ENCODE measurements at regions of chr10 and their contacts with region 1.

Region 1: GRCh38 chr10:5977471-5978229 is at the start of gene IL15RA:
- DNase-seq: peak; percentile 82 to 90
- ATAC-seq: peak; percentile 77 to 88 (median 82)
- H3K4me3 ChIP-seq: peak within 1 kb of the TSS; percentile 97
- H3K4me3 Mint-ChIP-seq: peak within 1 kb of the TSS; percentile 94
- H3K27ac ChIP-seq: peak within 1 kb of the TSS; percentile 89
- H3K27ac Mint-ChIP-seq: peak within 1 kb of the TSS; percentile 84 to 89
- H3K4me1 ChIP-seq: peaks cover 22% of the 10 kb centered on the region
- H3K4me1 Mint-ChIP-seq: peaks cover 23 to 24% of the 10 kb centered on the region in 2 donors
- H3K27me3 ChIP-seq: no peaks in the 10 kb centered on the region
- H3K27me3 Mint-ChIP-seq: no peaks in the 10 kb centered on the region
- CTCF ChIP-seq: no peak
- total RNA-seq, gene IL15RA: 10.7 to 11.8 (median 11.3) TPM

Region 2: GRCh38 chr10:5692461-5693358 is 284.9 kb before region 1 on chr10:
- intact Hi-C with region 1: loop called (anchors 10 kb)
- DNase-seq: peak; percentile 80 to 81
- ATAC-seq: peak; percentile 95 to 97 (median 96)
- H3K4me3 ChIP-seq: peak overlapping the region; percentile 35
- H3K4me3 Mint-ChIP-seq: peak overlapping the region; percentile 86
- H3K27ac ChIP-seq: peak overlapping the region; percentile 67
- H3K27ac Mint-ChIP-seq: peak overlapping the region; percentile 92 to 97
- H3K4me1 ChIP-seq: peaks cover 15% of the 10 kb centered on the region
- H3K4me1 Mint-ChIP-seq: peaks cover 51 to 54% of the 10 kb centered on the region in 2 donors
- H3K27me3 ChIP-seq: no peaks in the 10 kb centered on the region
- H3K27me3 Mint-ChIP-seq: no peaks in the 10 kb centered on the region
- CTCF ChIP-seq: no peak

Region 3: GRCh38 chr10:5932345-5932744 is 45.3 kb before region 1 on chr10:
- intact Hi-C with region 1: no loop called
- DNase-seq: no peak
- ATAC-seq: no peak
- H3K4me3 ChIP-seq: no peak overlapping the region
- H3K4me3 Mint-ChIP-seq: no peak overlapping the region
- H3K27ac ChIP-seq: no peak overlapping the region
- H3K27ac Mint-ChIP-seq: no peak overlapping the region
- H3K4me1 ChIP-seq: no peaks in the 10 kb centered on the region
- H3K4me1 Mint-ChIP-seq: no peaks in the 10 kb centered on the region
- H3K27me3 ChIP-seq: no peaks in the 10 kb centered on the region
- H3K27me3 Mint-ChIP-seq: no peaks in the 10 kb centered on the region
- CTCF ChIP-seq: no peak

Region 4: DNA sequence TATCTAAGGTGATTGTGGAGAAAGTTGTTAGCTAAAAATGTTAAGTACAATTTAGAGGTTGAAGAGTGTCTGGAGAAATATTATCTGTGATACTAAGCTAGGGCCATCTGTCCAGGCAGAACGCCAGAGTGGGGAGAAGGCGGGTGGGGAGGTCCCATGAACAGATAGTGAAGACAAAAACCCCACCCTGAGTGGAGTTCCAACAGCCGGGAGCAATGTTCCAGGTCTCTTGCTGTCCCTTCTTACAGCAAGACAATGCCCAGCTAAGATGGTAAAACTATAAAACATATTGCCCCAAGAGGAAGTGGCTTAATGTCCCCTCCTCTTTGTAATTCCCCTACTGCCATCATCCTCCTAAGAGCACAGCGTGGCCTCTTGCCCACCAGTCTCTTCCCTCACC is 10.1 kb after region 1 on chr10:
- intact Hi-C with region 1: no loop called
- DNase-seq: no peak
- ATAC-seq: peak; percentile 52 to 78 (median 67)
- H3K4me3 ChIP-seq: no peak overlapping the region
- H3K4me3 Mint-ChIP-seq: no peak overlapping the region
- H3K27ac ChIP-seq: no peak overlapping the region
- H3K27ac Mint-ChIP-seq: no peak overlapping the region
- H3K4me1 ChIP-seq: peaks cover 5% of the 10 kb centered on the region
- H3K4me1 Mint-ChIP-seq: peaks cover 0 to 10% of the 10 kb centered on the region in 2 donors
- H3K27me3 ChIP-seq: no peaks in the 10 kb centered on the region
- H3K27me3 Mint-ChIP-seq: peaks cover 3 to 17% of the 10 kb centered on the region in 2 donors
- CTCF ChIP-seq: no peak

Region 5: GRCh38 chr10:5999438-6000165 is 22.0 kb after region 1 on chr10:
- intact Hi-C with region 1: no loop called
- DNase-seq: no peak
- ATAC-seq: no peak
- H3K4me3 ChIP-seq: no peak overlapping the region
- H3K4me3 Mint-ChIP-seq: no peak overlapping the region
- H3K27ac ChIP-seq: no peak overlapping the region
- H3K27ac Mint-ChIP-seq: no peak overlapping the region
- H3K4me1 ChIP-seq: no peaks in the 10 kb centered on the region
- H3K4me1 Mint-ChIP-seq: no peaks in the 10 kb centered on the region
- H3K27me3 ChIP-seq: no peaks in the 10 kb centered on the region
- H3K27me3 Mint-ChIP-seq: peaks cover 23 to 25% of the 10 kb centered on the region in 2 donors
- CTCF ChIP-seq: no peak

Measured in natural killer cell (primary cell).